AG04449 (cell line): ENCODE measurements at regions of chr6 and their contacts with region 1.

Region 1: GRCh38 chr6:39892490-39893129 is 41.7 kb downstream of the MOCS1 start:
- DNase-seq: peak; percentile 10
- H3K4me3 ChIP-seq: no peak overlapping the region
- CTCF ChIP-seq: peak; percentile 89

Region 2: DNA sequence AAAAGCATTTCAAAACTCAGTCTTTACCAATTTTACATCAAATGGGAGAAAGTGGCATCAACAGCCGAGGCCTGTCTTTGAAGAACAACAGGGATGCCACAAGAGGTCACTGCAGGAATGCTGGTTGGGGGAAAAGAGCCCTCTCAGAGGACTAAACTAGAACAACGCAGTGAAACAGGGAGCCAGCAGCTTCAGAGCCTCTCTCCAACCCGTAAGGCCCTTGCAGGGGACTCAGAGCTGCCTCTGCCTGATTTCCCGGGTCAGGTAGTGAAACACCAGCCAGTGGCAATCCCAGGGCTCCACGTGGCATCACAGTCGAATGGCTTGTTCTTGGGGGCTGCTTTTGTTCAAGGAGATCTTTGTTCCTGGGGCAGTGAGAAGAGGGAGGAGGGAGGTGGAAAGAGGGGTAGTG is 515.1 kb before region 1 on chr6:
- CTCF ChIA-PET with region 1: interaction called, 26 read pairs
- POLR2A ChIA-PET with region 1: no interaction called
- DNase-seq: peak; percentile 36
- H3K4me3 ChIP-seq: no peak overlapping the region
- CTCF ChIP-seq: peak; percentile 68

Region 3: GRCh38 chr6:39516471-39516870 is 376.1 kb before region 1 on chr6:
- CTCF ChIA-PET with region 1: no interaction called
- POLR2A ChIA-PET with region 1: no interaction called
- DNase-seq: no peak
- H3K4me3 ChIP-seq: no peak overlapping the region
- CTCF ChIP-seq: no peak

Region 4: GRCh38 chr6:39882531-39882899 is 10.1 kb before region 1 on chr6:
- CTCF ChIA-PET with region 1: interaction called, 19 read pairs
- POLR2A ChIA-PET with region 1: no interaction called
- DNase-seq: peak; percentile 99
- H3K4me3 ChIP-seq: peak overlapping the region; percentile 42
- CTCF ChIP-seq: no peak

Region 5: DNA sequence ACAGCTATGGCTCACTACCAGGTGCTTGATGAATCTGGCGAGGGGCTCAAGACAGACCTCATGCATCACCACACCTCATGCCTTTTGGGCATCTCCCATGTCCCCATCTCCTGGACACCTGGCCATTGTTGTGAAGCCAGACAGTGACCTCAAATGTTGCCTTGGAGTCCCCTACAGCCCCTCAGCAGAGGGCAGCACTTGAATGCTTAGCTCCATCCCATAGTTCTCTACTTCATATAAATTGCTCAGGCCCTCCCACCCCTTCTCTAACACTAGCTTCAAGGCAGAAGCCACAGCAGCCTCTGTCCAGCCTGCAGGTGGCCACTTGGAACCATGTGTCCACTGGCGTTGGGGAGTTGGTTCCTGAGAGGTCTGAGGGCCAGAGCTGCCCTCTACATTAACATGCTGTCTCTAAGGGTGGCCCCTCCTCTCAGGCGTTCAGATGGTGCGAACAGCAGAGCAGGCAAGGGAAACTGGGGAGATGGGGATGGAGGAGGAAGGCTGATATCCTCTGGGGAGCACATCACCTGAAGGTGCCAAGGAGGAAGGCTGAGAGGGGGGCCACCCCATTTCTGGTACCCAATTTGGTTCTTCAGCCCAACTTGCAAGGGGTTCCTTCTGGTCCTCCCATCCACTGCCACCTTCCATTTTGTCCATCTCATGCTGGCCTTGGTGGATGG is 10.3 kb after region 1 on chr6:
- CTCF ChIA-PET with region 1: interaction called, 21 read pairs
- POLR2A ChIA-PET with region 1: interaction called, 3 read pairs
- DNase-seq: no peak
- H3K4me3 ChIP-seq: no peak overlapping the region
- CTCF ChIP-seq: no peak

Region 6: GRCh38 chr6:39964094-39964493 is 71.5 kb after region 1 on chr6:
- CTCF ChIA-PET with region 1: no interaction called
- POLR2A ChIA-PET with region 1: no interaction called
- DNase-seq: no peak
- H3K4me3 ChIP-seq: no peak overlapping the region
- CTCF ChIP-seq: no peak

Region 7: DNA sequence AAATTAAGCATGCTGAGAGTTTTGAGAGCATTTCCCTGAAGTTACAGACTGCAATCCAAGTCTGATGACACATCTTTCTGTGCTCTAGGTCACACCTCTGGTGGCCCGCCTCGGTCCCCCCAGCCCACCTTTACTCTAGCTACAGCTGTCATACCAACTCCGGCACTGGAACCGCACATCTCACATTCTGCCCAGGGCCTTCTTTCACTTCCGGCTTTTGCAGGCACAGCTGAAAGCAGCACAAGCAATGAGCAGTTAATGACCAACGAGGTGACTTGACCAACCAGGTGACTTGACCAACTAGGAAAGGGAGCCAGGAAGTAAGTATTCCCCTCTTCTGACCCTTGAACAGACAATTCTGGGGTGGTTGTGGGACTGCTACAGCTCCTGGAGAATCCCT is 130.3 kb after region 1 on chr6:
- CTCF ChIA-PET with region 1: no interaction called
- POLR2A ChIA-PET with region 1: no interaction called
- DNase-seq: no peak
- H3K4me3 ChIP-seq: no peak overlapping the region
- CTCF ChIP-seq: no peak